CD4-positive, alpha-beta memory T cell (primary cell): ENCODE measurements at regions of chr7 and their contacts with region 1.

Region 1: DNA sequence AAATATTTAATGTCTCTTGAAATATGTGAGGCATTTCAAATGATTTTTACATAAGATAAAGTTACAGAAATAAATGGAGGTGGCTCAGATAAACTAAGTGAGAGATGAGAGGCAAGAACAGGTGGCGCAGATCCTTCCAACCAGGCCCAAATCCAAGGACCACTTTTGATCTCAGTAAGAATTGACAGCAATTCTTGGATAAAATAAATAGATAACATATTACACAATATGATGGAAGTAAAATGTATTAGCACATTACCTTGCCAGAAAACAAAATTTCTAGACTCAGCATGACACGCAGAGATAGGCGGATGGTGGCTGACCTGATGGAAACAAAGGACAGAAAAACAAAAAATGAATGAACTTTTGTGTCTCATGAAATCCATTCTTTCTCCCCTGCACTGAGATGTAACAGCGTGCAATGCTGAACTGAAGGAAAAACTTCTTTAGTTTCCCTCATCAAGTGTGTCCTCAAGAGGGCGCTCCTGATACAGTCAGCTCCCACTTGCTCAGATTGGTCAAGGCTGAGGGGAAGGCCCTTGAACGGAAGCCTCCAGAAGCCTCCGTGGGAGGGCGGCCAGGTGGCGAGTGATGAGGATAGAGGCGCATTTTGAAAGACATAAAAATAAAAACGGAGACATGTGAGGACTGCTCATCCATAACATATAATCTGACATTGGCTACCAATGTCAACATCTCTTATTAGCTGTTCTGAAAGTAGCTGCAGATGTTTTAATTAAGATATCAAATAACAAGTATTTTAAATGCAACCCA is 62.8 kb upstream of the GSDME start:
- DNase-seq: peak; percentile 70 to 81 (median 74)
- H3K4me3 ChIP-seq: peak overlapping the region in 1 of 2 donors; percentile 23
- H3K4me3 Mint-ChIP-seq: peak overlapping the region; percentile 78 to 90 (median 84)
- H3K27ac ChIP-seq: peak overlapping the region; percentile 78
- H3K27ac Mint-ChIP-seq: peak overlapping the region; percentile 88 to 100 (median 98)
- H3K4me1 ChIP-seq: peaks cover 42% of the 10 kb centered on the region
- H3K4me1 Mint-ChIP-seq: peaks cover 29 to 55% (median 42%) of the 10 kb centered on the region in 4 donors
- H3K27me3 ChIP-seq: no peaks in the 10 kb centered on the region
- H3K27me3 Mint-ChIP-seq: no peaks in the 10 kb centered on the region

Region 2: GRCh38 chr7:24653316-24654085 is 166.6 kb before region 1 on chr7:
- CTCF ChIA-PET with region 1: no interaction called
- POLR2A ChIA-PET with region 1: no interaction called
- intact Hi-C with region 1: no loop called
- DNase-seq: no peak
- H3K4me3 ChIP-seq: no peak overlapping the region
- H3K4me3 Mint-ChIP-seq: peak overlapping the region; percentile 0 to 78 (median 63)
- H3K27ac ChIP-seq: no peak overlapping the region
- H3K27ac Mint-ChIP-seq: peak overlapping the region in 4 of 7 donors; percentile 23 to 74 (median 44)
- H3K4me1 ChIP-seq: peaks cover 6% of the 10 kb centered on the region
- H3K4me1 Mint-ChIP-seq: peaks cover 0 to 10% (median 5%) of the 10 kb centered on the region in 4 donors
- H3K27me3 ChIP-seq: no peaks in the 10 kb centered on the region
- H3K27me3 Mint-ChIP-seq: no peaks in the 10 kb centered on the region

Region 3: DNA sequence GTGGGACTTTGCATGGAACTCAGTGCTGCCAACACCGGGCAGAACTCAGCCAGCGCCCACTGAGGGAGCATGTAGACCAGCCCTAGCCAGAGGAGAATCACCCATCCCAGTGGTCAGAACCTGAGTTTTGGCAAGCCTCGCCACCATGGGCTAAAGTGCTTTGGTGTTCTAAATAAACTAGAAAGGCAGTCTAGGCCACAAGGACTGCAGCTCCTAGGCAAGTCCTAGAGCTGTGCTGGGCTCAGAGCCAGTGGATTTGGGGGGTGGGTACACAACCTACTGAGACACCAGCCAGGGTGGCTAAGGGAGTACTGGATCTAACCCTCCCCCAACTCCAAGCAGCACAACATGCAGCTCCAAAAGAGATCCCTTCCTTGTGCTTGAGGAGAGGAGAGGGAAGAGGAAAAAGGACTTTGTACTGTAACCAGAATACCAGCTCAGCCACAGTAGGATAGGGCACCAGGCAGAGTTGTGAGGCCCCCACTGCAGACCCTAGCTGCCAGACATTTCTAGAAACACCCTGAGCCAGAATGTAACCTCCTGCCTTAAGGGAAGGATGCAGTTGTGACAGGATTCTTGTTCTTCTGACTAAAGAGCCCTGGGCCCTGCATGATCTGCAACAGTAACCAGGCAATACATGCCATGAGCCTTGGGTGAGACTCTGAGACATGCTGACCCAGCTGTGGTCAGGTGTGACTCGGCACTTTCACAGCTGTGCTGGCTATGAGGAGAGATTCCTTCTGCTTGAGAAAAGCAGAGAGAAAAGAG is 87.3 kb before region 1 on chr7:
- CTCF ChIA-PET with region 1: no interaction called
- POLR2A ChIA-PET with region 1: no interaction called
- intact Hi-C with region 1: no loop called
- DNase-seq: no peak
- H3K4me3 ChIP-seq: no peak overlapping the region
- H3K4me3 Mint-ChIP-seq: no peak overlapping the region
- H3K27ac ChIP-seq: no peak overlapping the region
- H3K27ac Mint-ChIP-seq: no peak overlapping the region
- H3K4me1 ChIP-seq: peaks cover 11% of the 10 kb centered on the region
- H3K4me1 Mint-ChIP-seq: peaks cover 3 to 13% (median 11%) of the 10 kb centered on the region in 4 donors
- H3K27me3 ChIP-seq: no peaks in the 10 kb centered on the region
- H3K27me3 Mint-ChIP-seq: peaks cover 6 to 14% of the 10 kb centered on the region in 2 donors

Region 4: DNA sequence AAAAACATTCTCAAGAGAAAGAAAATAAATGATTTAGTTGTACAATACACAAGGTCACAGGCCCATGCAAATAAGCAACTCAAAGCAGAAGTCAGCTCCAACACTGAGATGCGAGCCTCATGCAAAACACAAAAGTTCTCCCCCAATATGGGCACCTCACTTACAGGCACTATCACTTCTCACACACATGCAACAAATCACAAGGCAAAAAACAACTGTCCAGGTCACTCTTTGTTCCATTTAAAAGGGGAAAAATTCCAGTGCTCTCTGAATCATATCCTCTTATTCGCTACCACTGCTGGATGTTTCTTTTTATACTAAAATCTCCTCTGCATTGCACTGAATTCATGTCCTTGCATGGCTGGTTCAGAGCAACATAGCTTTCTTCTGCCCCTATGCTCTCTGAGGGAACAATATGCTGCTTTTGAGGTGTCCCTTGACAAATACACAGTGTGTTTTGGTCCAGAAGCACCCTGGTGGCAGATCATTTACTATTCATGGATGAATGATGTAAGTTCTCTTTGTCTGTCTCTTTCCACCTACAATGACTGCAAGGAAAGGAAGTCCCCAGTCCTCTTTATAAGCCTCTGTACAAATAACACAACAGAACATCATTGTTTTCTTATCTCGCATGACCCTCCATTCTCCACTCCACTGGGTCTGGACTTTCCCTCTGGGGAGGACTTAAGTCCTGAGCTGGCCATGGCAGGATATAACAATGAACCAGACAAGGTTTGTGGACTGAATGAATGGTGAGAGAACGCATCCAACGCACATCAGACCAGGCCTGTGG is 22.5 kb after region 1 on chr7:
- CTCF ChIA-PET with region 1: interaction called, 48 read pairs
- POLR2A ChIA-PET with region 1: interaction called, 34 read pairs
- intact Hi-C with region 1: no loop called
- DNase-seq: no peak
- H3K4me3 ChIP-seq: no peak overlapping the region
- H3K4me3 Mint-ChIP-seq: no peak overlapping the region
- H3K27ac ChIP-seq: no peak overlapping the region
- H3K27ac Mint-ChIP-seq: peak overlapping the region in 6 of 7 donors; percentile 19 to 83 (median 47)
- H3K4me1 ChIP-seq: no peaks in the 10 kb centered on the region
- H3K4me1 Mint-ChIP-seq: peaks cover 7 to 24% (median 14%) of the 10 kb centered on the region in 4 donors
- H3K27me3 ChIP-seq: no peaks in the 10 kb centered on the region
- H3K27me3 Mint-ChIP-seq: no peaks in the 10 kb centered on the region

Region 5: DNA sequence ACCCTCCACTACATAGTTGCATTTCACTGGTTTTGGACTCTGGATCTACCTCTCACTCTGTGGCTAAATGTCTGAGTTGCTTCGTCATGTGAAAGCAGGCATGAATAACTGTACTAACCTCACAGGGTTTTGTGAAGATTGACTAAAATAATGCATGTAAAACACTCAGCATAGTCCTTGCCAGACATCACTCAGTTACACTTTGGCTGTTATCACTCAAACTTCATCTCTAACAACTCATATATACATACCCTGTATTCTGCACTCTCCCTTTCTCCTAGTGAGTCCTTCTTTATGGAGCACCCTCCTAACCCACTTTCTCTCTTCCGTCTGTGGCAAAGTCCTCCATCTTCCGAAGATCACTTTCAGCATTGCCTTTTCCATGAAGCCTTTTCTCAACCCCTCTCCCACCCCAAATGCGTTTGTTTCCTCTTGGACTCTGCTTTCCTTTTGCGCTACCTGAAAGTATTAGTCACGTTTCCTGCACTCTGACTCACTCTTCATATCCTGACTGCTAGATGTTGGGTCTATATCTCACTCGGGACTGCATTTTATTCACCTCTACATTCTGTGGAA is 87.3 kb after region 1 on chr7:
- CTCF ChIA-PET with region 1: interaction called, 23 read pairs
- POLR2A ChIA-PET with region 1: interaction called, 14 read pairs
- intact Hi-C with region 1: loop called (anchors 1 kb)
- DNase-seq: peak; percentile 16 to 76 (median 29)
- H3K4me3 ChIP-seq: peak overlapping the region; percentile 14 to 23
- H3K4me3 Mint-ChIP-seq: no peak overlapping the region
- H3K27ac ChIP-seq: peak overlapping the region; percentile 6
- H3K27ac Mint-ChIP-seq: no peak overlapping the region
- H3K4me1 ChIP-seq: peaks cover 88% of the 10 kb centered on the region
- H3K4me1 Mint-ChIP-seq: peaks cover 35 to 42% (median 38%) of the 10 kb centered on the region in 4 donors
- H3K27me3 ChIP-seq: no peaks in the 10 kb centered on the region
- H3K27me3 Mint-ChIP-seq: no peaks in the 10 kb centered on the region

Region 6: DNA sequence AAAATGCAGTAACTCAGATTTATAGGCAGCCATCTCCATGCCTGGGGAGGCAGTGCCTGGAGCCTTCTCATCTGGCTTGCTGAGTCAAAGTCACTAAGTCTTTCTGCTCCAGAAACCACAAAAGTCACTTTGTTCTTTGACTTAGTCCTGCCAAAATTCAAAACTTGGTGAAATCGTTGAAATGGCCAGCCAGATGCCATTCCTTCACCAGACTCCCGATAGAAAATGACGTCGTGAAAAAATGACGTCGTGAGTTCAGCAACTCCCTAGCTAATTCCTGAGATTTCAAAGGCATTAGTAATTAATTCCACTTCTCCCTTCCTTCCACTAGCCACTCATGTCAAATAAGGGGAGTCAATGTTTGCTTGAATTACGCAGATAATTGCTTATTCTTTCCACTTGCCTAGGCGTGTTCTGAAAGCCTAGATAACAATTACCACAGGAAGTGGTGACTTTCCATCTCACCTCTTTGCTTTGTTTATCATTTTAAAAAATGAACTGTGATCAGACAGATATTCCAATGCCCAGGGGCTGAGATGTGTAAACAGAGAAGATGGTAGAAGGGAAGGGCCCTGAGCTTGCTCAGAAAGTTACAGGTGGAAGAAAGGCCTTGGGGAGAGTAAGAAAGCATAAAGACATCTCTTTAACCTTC is 208.4 kb after region 1 on chr7:
- CTCF ChIA-PET with region 1: interaction called, 43 read pairs
- POLR2A ChIA-PET with region 1: interaction called, 38 read pairs
- intact Hi-C with region 1: loop called (anchors 1 kb)
- DNase-seq: peak; percentile 54 to 78 (median 71)
- H3K4me3 ChIP-seq: no peak overlapping the region
- H3K4me3 Mint-ChIP-seq: peak overlapping the region in 7 of 8 donors; percentile 61 to 92 (median 78)
- H3K27ac ChIP-seq: peak overlapping the region; percentile 53
- H3K27ac Mint-ChIP-seq: peak overlapping the region; percentile 67 to 97 (median 94)
- H3K4me1 ChIP-seq: peaks cover 55% of the 10 kb centered on the region
- H3K4me1 Mint-ChIP-seq: peaks cover 25 to 78% (median 62%) of the 10 kb centered on the region in 4 donors
- H3K27me3 ChIP-seq: no peaks in the 10 kb centered on the region
- H3K27me3 Mint-ChIP-seq: peaks cover 0 to 1% of the 10 kb centered on the region in 2 donors

Region 7: DNA sequence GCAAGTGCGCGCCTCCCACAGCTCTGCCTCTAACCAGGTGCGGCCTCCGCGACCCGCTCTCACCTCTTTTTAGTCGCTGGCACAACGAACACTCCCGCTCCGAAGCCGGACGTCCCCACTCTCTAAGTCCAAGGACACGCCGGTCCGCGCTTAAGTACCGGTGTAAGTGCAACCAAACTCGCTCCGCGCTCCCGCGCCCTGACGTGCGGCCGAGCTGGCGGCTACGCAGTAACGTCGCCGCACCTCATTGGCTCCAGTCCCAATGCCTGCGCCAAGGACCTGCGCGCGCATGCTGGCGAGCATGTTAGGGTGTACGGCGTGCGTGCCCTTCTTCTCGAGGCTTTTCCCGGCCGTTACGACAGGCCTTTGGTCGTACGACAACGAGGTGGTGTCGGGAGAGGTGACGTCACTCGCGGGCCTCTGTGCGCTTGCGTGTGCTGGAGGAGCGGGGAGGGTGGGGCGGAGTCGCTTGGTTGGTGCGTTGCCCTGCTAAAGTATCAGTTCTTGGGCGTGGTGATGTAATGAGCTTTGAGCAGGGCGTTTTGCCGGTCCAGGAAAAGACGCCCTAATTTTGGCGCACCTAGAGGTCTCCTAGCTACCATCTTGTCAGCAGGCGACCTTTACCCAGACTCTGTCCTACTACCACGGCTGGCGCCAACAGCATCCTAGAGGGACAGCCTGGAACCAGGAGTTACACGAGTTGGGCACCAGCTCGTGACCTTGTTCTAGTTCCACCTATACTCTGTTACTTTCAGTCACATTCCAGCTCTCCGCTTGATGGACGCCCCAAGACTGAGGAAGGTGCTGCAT is 305.2 kb after region 1 on chr7 and contains the start of gene CYCS:
- CTCF ChIA-PET with region 1: interaction called, 8 read pairs
- POLR2A ChIA-PET with region 1: interaction called, 26 read pairs
- intact Hi-C with region 1: no loop called
- DNase-seq: peak; percentile 99 to 100 (median 99)
- H3K4me3 ChIP-seq: peak within 1 kb of the TSS; percentile 72 to 82
- H3K4me3 Mint-ChIP-seq: peak within 1 kb of the TSS; percentile 97 to 100 (median 100)
- H3K27ac ChIP-seq: peak within 1 kb of the TSS; percentile 97
- H3K27ac Mint-ChIP-seq: peak within 1 kb of the TSS; percentile 96 to 100 (median 100)
- H3K4me1 ChIP-seq: peaks cover 9% of the 10 kb centered on the region
- H3K4me1 Mint-ChIP-seq: peaks cover 14 to 26% (median 15%) of the 10 kb centered on the region in 4 donors
- H3K27me3 ChIP-seq: no peaks in the 10 kb centered on the region
- H3K27me3 Mint-ChIP-seq: no peaks in the 10 kb centered on the region
- total RNA-seq, gene CYCS: 46.9 to 54.2 TPM

Region 8: GRCh38 chr7:25333296-25333928 is 513.3 kb after region 1 on chr7:
- CTCF ChIA-PET with region 1: no interaction called
- POLR2A ChIA-PET with region 1: no interaction called
- intact Hi-C with region 1: no loop called
- DNase-seq: no peak
- H3K4me3 ChIP-seq: no peak overlapping the region
- H3K4me3 Mint-ChIP-seq: no peak overlapping the region
- H3K27ac ChIP-seq: no peak overlapping the region
- H3K27ac Mint-ChIP-seq: no peak overlapping the region
- H3K4me1 ChIP-seq: no peaks in the 10 kb centered on the region
- H3K4me1 Mint-ChIP-seq: no peaks in the 10 kb centered on the region
- H3K27me3 ChIP-seq: no peaks in the 10 kb centered on the region
- H3K27me3 Mint-ChIP-seq: peaks cover 0 to 9% of the 10 kb centered on the region in 2 donors